T-cell (primary cell): ENCODE measurements at regions of chr14 and their contacts with region 1.

Region 1: GRCh38 chr14:55354500-55354899 is 57.1 kb downstream of the ATG14 start:
- DNase-seq: peak; percentile 24 to 82 (median 66)
- ATAC-seq: peak; percentile 90 to 95 (median 92)
- H3K4me3 ChIP-seq: peak overlapping the region in 1 of 2 donors; percentile 16
- H3K4me3 Mint-ChIP-seq: peak overlapping the region; percentile 55 to 80 (median 55)
- H3K27ac ChIP-seq: peak overlapping the region; percentile 77
- H3K27ac Mint-ChIP-seq: peak overlapping the region; percentile 89 to 98
- H3K4me1 ChIP-seq: peaks cover 9 to 17% of the 10 kb centered on the region in 2 experiments
- H3K4me1 Mint-ChIP-seq: peaks cover 17 to 38% (median 30%) of the 10 kb centered on the region in 3 donors
- H3K27me3 ChIP-seq: no peaks in the 10 kb centered on the region
- H3K27me3 Mint-ChIP-seq: no peaks in the 10 kb centered on the region

Region 2: GRCh38 chr14:55212634-55213033 is 141.9 kb before region 1 on chr14:
- CTCF ChIA-PET with region 1: interaction called, 8 to 19 read pairs
- POLR2A ChIA-PET with region 1: no interaction called
- DNase-seq: no peak
- ATAC-seq: peak in 1 of 4 experiments; percentile 17
- H3K4me3 ChIP-seq: no peak overlapping the region
- H3K4me3 Mint-ChIP-seq: no peak overlapping the region
- H3K27ac ChIP-seq: no peak overlapping the region
- H3K27ac Mint-ChIP-seq: no peak overlapping the region
- H3K4me1 ChIP-seq: peaks cover 0 to 2% of the 10 kb centered on the region in 2 experiments
- H3K4me1 Mint-ChIP-seq: peaks cover 3 to 7% (median 3%) of the 10 kb centered on the region in 3 donors
- H3K27me3 ChIP-seq: no peaks in the 10 kb centered on the region
- H3K27me3 Mint-ChIP-seq: no peaks in the 10 kb centered on the region

Region 3: GRCh38 chr14:55270832-55271565 is 83.5 kb before region 1 on chr14 and contains the start of gene FBXO34:
- CTCF ChIA-PET with region 1: interaction called, 27 to 85 read pairs
- POLR2A ChIA-PET with region 1: interaction called in 1 of 2 experiments, 3 read pairs
- DNase-seq: peak; percentile 94 to 100 (median 99)
- ATAC-seq: peak; percentile 89 to 95 (median 90)
- H3K4me3 ChIP-seq: peak within 1 kb of the TSS; percentile 71 to 97
- H3K4me3 Mint-ChIP-seq: peak within 1 kb of the TSS; percentile 86 to 92 (median 88)
- H3K27ac ChIP-seq: peak within 1 kb of the TSS; percentile 78
- H3K27ac Mint-ChIP-seq: peak within 1 kb of the TSS; percentile 78 to 88
- H3K4me1 ChIP-seq: peaks cover 4 to 8% of the 10 kb centered on the region in 2 experiments
- H3K4me1 Mint-ChIP-seq: peaks cover 38 to 41% (median 40%) of the 10 kb centered on the region in 3 donors
- H3K27me3 ChIP-seq: no peaks in the 10 kb centered on the region
- H3K27me3 Mint-ChIP-seq: no peaks in the 10 kb centered on the region
- total RNA-seq, gene FBXO34: 22.1 to 36.9 (median 28.7) TPM

Region 4: GRCh38 chr14:55297611-55298441 is 56.7 kb before region 1 on chr14:
- CTCF ChIA-PET with region 1: interaction called, 4 to 12 read pairs
- POLR2A ChIA-PET with region 1: no interaction called
- DNase-seq: peak in 17 of 35 experiments; percentile 5 to 48 (median 14)
- ATAC-seq: peak in 1 of 4 experiments; percentile 48
- H3K4me3 ChIP-seq: no peak overlapping the region
- H3K4me3 Mint-ChIP-seq: no peak overlapping the region
- H3K27ac ChIP-seq: no peak overlapping the region
- H3K27ac Mint-ChIP-seq: peak overlapping the region in 1 of 2 donors; percentile 55
- H3K4me1 ChIP-seq: peaks cover 9 to 12% of the 10 kb centered on the region in 2 experiments
- H3K4me1 Mint-ChIP-seq: peaks cover 61 to 77% (median 72%) of the 10 kb centered on the region in 3 donors
- H3K27me3 ChIP-seq: no peaks in the 10 kb centered on the region
- H3K27me3 Mint-ChIP-seq: no peaks in the 10 kb centered on the region

Region 5: DNA sequence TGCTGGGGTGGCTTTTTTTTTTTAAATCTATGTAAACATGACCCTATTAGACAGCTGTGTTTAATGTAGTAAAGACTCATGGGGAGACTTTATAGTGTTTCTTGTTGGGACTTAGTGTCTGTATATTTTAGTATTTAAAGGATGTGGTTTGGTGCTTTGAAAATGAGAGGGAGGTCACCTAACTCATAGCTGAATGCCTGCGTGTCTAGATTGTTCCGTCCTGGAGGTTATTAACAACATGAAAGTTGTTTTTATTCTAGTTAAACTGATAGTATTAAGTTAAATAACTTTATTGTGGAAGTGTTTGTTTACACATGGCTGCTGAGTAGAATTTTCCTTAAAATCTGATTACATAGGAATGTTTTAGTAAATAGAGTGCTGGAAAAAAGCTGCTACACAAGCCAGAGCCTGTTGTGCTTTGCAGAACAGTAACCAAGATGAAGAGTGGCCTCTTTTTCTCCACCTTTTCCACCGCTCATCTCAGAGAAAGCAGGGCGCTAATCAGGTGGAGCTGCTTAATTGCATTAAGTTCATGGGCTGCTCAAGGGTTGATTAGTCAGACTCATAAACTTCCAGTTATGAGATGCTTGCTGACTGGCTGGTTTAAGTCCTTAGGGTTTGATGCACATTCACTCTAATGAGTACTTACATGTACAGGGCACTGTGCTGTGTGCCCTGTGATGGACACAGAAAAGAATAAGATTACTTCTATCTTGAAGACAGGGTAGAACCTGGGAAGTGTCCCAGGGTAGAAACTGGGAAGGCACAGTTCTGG is 20.6 kb before region 1 on chr14:
- CTCF ChIA-PET with region 1: interaction called, 8 to 50 read pairs
- POLR2A ChIA-PET with region 1: interaction called, 3 to 8 read pairs
- DNase-seq: peak in 1 of 35 experiments; percentile 48
- ATAC-seq: peak in 2 of 4 experiments; percentile 38 to 40
- H3K4me3 ChIP-seq: peak overlapping the region in 1 of 2 donors; percentile 15
- H3K4me3 Mint-ChIP-seq: peak overlapping the region; percentile 75 to 84 (median 83)
- H3K27ac ChIP-seq: peak overlapping the region; percentile 81
- H3K27ac Mint-ChIP-seq: peak overlapping the region; percentile 94 to 97
- H3K4me1 ChIP-seq: peaks cover 47 to 54% of the 10 kb centered on the region in 2 experiments
- H3K4me1 Mint-ChIP-seq: peaks cover 82 to 88% (median 87%) of the 10 kb centered on the region in 3 donors
- H3K27me3 ChIP-seq: no peaks in the 10 kb centered on the region
- H3K27me3 Mint-ChIP-seq: no peaks in the 10 kb centered on the region